Posterior vena cava (tissue), 2 donors: ENCODE measurements at regions of chr7 and their contacts with region 1.

Region 1: GRCh38 chr7:28096713-28097112 is 83.9 kb downstream of the JAZF1 start:
- DNase-seq: no peak

Region 2: GRCh38 chr7:27196287-27196767 is 900.4 kb before region 1 on chr7:
- intact Hi-C with region 1: loop called in 1 of 2 experiments (anchors 10 kb)
- DNase-seq: peak; percentile 94

Region 3: DNA sequence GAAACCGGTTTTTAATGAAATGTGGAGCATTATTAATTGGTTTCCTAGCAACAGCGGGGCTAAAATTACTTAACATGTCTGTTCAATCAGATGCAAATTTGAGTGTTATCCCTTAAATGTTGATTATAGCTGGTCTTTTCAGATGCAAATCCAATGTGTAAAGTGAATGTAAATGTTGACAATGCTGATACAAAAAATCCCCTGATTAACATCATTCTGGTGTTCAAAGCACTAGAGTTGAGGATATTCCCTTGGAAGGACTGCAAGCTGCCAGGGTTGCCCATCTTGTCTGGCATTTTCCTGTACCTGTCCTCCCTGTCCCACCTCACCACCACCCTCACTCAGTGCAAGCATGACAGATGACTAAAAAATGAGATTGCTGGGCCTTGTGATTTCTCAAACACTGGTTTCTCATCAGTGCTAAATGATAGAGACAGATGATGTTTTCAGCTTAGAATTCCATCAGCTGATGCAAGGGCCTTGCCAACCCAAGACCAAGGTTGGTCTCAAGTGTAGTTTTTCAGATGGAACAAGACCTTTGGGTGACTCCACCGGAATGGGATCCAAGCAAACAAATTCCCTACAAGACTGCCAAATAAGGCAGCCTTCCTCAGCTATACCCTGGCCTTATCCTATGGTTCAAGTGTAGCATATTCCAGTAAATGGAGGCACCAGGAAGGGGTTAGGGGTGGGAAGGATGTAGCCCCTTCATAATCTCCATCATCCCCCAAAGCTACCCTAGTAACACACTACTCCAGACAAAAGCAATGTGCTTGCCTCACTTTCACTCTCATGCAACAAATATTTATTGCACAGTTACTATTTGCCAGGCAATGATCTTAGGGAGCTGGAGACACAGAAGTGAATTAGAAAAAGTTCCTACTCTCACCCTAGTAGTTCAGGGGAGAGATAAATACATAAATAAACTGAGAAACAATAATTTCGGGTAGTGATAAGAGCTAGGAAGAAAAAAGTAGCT is 29.0 kb after region 1 on chr7:
- intact Hi-C with region 1: no loop called
- DNase-seq: no peak

Region 4: GRCh38 chr7:28155019-28155660 is 58.4 kb after region 1 on chr7:
- intact Hi-C with region 1: no loop called
- DNase-seq: no peak

Region 5: GRCh38 chr7:28207486-28208158 is 110.9 kb after region 1 on chr7:
- intact Hi-C with region 1: no loop called
- DNase-seq: no peak